ENCODE measurements at regions of chr14 and their contacts with region 1.

Region 1: GRCh38 chr14:75709207-75709812 is 48.3 kb downstream of the TTLL5 start:
- DNase-seq: peak; percentile 47 to 75 (median 48)
- ATAC-seq: peak; percentile 81
- H3K4me3 ChIP-seq: no peak overlapping the region
- H3K27ac ChIP-seq: no peak overlapping the region
- H3K4me1 ChIP-seq: no peaks in the 10 kb centered on the region
- H3K27me3 ChIP-seq: no peaks in the 10 kb centered on the region
- CTCF ChIP-seq: peak; percentile 58 to 74 (median 68); a peak in 5 of 6 replicates
- EP300 ChIP-seq: no peak
- POLR2A ChIP-seq: no peak
- RAD21 ChIP-seq: peak; percentile 54 to 67

Region 2: GRCh38 chr14:75176142-75176820 is 533.0 kb before region 1 on chr14 and contains the start of gene TMED10:
- CTCF ChIA-PET with region 1: no interaction called
- POLR2A ChIA-PET with region 1: no interaction called
- in situ Hi-C with region 1: no loop called
- intact Hi-C with region 1: no loop called
- DNase-seq: peak; percentile 75 to 87 (median 80)
- ATAC-seq: peak; percentile 84
- H3K4me3 ChIP-seq: peak within 1 kb of the TSS; percentile 71
- H3K27ac ChIP-seq: peak within 1 kb of the TSS; percentile 96
- H3K4me1 ChIP-seq: peaks cover 4 to 8% of the 10 kb centered on the region in 2 experiments; a peak in 4 of 5 replicates
- H3K27me3 ChIP-seq: no peaks in the 10 kb centered on the region
- CTCF ChIP-seq: no peak; a peak in 1 of 6 replicates
- EP300 ChIP-seq: no peak
- POLR2A ChIP-seq: peak; percentile 85
- RAD21 ChIP-seq: 0 out of 4 replicates have a peak, but pooled peaks of 1 of the 2 experiments have one; percentile 9
- polyA plus RNA-seq, gene TMED10: 206 to 233 TPM

Region 3: DNA sequence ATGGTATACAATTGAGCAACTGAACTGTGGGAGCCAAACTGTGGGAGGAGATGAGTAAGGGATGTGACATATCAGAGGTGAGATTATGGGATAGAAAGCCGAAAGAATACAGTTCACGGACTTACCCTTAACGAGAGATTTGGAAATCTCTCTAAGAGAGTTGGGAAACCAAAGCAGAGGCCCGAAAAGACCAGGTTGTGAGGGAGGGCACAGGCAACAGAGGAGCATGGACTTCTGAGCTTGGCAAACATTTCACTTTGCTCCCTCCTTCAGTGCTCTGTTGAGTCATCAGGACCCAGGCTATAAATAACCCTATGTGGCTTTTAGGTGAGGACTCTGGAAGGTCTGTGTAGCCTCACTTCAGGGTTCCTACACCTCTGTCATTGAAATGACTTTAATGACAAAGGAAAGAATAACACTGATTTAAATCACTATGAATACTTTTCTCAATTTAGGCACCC is 151.9 kb after region 1 on chr14:
- CTCF ChIA-PET with region 1: no interaction called
- POLR2A ChIA-PET with region 1: no interaction called
- in situ Hi-C with region 1: no loop called
- intact Hi-C with region 1: loop called (anchors 5 kb)
- DNase-seq: peak; percentile 14 to 39 (median 22)
- ATAC-seq: peak; percentile 79
- H3K4me3 ChIP-seq: no peak overlapping the region
- H3K27ac ChIP-seq: peak overlapping the region; percentile 50; the same call in 2 of the 3 replicates
- H3K4me1 ChIP-seq: peaks cover 0 to 22% of the 10 kb centered on the region in 2 experiments; a peak in 3 of 5 replicates
- H3K27me3 ChIP-seq: no peaks in the 10 kb centered on the region
- CTCF ChIP-seq: no peak
- EP300 ChIP-seq: peak; percentile 15; the same call in 1 of the 2 replicates
- POLR2A ChIP-seq: no peak
- RAD21 ChIP-seq: no peak

Region 4: DNA sequence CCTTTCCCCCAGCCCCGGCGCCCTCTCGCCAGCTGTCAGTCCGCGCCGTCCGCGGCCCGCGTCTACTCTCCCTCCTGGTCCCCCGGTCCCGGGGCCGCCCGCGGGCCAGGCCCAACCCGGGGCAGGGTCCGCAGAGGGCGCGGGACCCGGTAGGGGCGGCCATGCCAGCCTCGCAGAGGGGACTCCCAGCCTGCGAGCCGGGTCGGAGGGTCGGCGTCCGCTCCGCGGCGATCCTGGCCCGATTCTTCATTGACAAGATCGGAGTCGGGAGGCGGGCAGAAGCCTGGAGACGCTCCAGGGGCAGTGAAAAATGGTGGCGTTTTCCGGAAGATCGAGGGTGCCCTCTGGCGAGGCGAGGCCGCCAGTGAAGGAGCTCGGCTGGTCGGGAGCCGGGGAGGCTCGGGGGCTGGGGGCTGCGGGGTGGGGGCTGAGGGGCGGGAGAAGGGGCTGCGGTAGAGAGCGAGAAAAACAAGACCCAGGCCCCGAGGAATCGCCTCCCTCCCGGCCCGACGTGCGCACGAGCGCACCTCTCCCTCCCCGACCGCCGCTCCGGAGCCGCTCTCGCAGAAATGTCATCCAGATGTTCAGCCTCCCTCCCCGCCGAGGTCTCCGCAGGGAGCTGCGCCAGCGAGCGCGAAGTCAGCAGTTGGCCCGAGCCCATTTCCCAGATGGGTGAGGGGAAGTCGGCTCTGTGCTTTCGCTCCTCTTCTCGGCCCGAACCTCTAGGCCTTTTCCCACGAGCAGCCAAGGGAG is 273.1 kb after region 1 on chr14:
- CTCF ChIA-PET with region 1: interaction called, 45 read pairs
- POLR2A ChIA-PET with region 1: interaction called, 7 read pairs
- in situ Hi-C with region 1: no loop called
- intact Hi-C with region 1: loop called (anchors 1 kb)
- DNase-seq: peak; percentile 67 to 80 (median 71)
- ATAC-seq: peak; percentile 88
- H3K4me3 ChIP-seq: peak overlapping the region; percentile 72
- H3K27ac ChIP-seq: peak overlapping the region; percentile 55; the same call in 1 of the 3 replicates
- H3K4me1 ChIP-seq: peaks cover 4 to 22% of the 10 kb centered on the region in 2 experiments; a peak in 4 of 5 replicates
- H3K27me3 ChIP-seq: no peaks in the 10 kb centered on the region
- CTCF ChIP-seq: peak; percentile 40 to 73 (median 68); a peak in 5 of 6 replicates
- EP300 ChIP-seq: no peak
- POLR2A ChIP-seq: no peak
- RAD21 ChIP-seq: peak; percentile 52 to 65

Region 5: DNA sequence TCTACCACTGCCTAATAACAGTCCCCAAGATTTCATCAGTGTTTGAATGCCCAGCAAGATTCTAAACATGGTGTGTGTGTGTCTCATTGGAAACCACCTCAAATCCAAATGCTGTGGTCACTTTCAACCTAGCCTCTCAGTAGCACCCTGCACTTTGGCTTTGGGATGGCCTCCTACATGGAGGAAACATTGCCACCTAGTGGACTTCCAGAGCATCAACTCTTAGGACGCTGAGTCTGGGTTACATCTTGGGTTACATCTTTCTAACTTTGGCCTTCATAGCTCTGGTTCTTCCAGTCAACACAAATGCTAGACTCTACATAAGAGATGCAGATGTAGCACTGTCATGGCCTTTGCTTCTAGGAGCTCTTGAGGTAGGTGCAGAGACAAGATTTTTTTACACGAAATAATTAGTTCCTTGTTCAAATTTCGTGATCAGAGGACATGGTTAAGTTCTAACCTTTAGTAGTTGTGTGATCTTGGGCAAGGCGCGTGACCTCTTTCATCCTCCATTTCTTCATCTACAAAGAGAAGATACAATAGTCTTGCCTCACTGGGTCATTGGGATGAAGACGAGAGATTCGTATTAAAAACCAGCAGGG is 938.5 kb after region 1 on chr14:
- CTCF ChIA-PET with region 1: interaction called, 3 read pairs
- POLR2A ChIA-PET with region 1: no interaction called
- in situ Hi-C with region 1: loop called (anchors 10 kb)
- intact Hi-C with region 1: loop called (anchors 10 kb)
- DNase-seq: peak; percentile 53 to 61 (median 54)
- ATAC-seq: peak; percentile 93
- H3K4me3 ChIP-seq: no peak overlapping the region
- H3K27ac ChIP-seq: no peak overlapping the region
- H3K4me1 ChIP-seq: no peaks in the 10 kb centered on the region
- H3K27me3 ChIP-seq: peaks cover 6 to 31% of the 10 kb centered on the region in 2 experiments; a peak in 3 of 5 replicates
- CTCF ChIP-seq: peak; percentile 69 to 71 (median 70)
- EP300 ChIP-seq: no peak
- POLR2A ChIP-seq: no peak
- RAD21 ChIP-seq: peak; percentile 27 to 71; a peak in 3 of 4 replicates

Measured in K562 (cell line).